ENCODE measurements at regions of chr13 and their contacts with region 1.

Region 1: DNA sequence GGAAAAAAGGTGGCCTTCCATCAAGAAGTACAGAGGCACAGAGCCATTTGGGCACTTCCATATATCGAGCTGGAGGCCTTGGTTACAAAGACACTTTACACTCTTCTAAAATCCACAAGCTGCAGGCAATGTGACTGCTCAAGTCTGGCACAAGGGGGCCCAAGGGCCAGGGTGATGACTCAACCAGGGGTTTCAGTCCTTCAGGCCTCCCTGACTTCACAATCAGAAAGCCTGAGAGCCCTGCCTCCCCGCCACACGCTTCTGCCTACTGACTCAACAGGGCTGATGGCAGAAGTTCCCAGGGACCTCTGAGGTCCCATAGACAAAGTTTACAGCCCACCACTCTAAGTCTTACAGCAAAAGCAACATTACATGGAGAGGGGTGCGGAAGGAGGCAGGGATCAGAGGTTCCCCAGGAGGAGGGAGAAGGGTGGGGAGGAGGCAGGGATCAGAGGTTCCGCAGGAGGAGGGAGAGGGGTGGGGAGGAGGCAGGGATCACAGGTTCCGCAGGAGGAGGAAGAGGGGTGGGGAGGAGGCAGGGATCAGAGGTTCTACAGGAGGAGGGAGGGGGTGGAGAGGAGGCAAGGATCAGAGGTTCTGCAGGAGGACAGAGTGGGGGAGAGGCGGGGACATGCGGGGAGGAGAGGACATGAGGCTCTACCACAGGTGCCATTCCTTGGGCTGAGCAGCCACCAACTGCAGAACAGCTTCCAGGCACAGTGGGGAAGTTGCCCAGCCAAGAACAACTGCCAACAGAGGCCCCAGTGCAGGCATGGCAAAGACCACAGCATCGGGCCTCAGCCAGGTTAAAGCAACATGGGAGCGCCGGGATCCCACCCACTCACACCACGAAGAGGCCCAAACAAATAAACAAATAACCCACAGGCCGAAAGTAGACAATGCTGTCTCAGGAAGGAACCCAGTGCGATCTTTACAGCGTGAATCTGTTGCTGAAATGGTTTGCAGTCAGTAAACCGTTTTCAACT is 52.0 kb downstream of the SLC7A1 start:
- DNase-seq: peak; percentile 19
- ATAC-seq: peak; percentile 97
- H3K4me3 Mint-ChIP-seq: no peak overlapping the region
- H3K27ac Mint-ChIP-seq: no peak overlapping the region
- H3K4me1 Mint-ChIP-seq: peaks cover 20% of the 10 kb centered on the region
- H3K27me3 Mint-ChIP-seq: no peaks in the 10 kb centered on the region
- CTCF ChIP-seq: no peak

Region 2: GRCh38 chr13:29496240-29496712 is 47.2 kb before region 1 on chr13:
- CTCF ChIA-PET with region 1: no interaction called
- POLR2A ChIA-PET with region 1: interaction called, 4 read pairs
- intact Hi-C with region 1: loop called (anchors 1 kb)
- DNase-seq: peak; percentile 38
- ATAC-seq: peak; percentile 70
- H3K4me3 Mint-ChIP-seq: peak overlapping the region; percentile 71
- H3K27ac Mint-ChIP-seq: peak overlapping the region; percentile 68
- H3K4me1 Mint-ChIP-seq: peaks cover 36% of the 10 kb centered on the region
- H3K27me3 Mint-ChIP-seq: no peaks in the 10 kb centered on the region
- CTCF ChIP-seq: no peak

Region 3: DNA sequence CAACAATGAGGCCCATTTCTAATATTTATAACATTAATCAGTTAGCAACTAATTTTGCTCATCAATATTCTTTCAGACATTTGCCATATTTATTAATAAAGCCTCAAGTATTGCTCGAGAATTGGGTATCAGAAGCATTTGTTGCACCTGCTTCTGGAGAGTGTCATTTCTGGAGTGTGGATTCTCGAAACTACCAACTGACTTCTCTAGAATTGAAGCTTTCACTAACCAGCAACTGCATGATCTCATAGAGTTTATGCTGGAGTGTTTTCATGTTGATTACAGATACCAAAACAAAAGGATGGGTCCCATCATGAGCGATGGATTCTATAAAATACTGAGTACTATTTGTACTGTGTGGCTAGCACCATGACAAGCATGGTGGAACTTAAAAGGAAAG is 173.0 kb after region 1 on chr13:
- CTCF ChIA-PET with region 1: no interaction called
- POLR2A ChIA-PET with region 1: no interaction called
- intact Hi-C with region 1: no loop called
- DNase-seq: no peak
- ATAC-seq: no peak
- H3K4me3 Mint-ChIP-seq: no peak overlapping the region
- H3K27ac Mint-ChIP-seq: no peak overlapping the region
- H3K4me1 Mint-ChIP-seq: no peaks in the 10 kb centered on the region
- H3K27me3 Mint-ChIP-seq: peaks cover 17% of the 10 kb centered on the region
- CTCF ChIP-seq: no peak

Measured in activated B cell treated with CpG ODN at 0.5 μM for 24 hours (primary cell).